ENCODE measurements at regions of chr13 and their contacts with region 1.

Region 1: DNA sequence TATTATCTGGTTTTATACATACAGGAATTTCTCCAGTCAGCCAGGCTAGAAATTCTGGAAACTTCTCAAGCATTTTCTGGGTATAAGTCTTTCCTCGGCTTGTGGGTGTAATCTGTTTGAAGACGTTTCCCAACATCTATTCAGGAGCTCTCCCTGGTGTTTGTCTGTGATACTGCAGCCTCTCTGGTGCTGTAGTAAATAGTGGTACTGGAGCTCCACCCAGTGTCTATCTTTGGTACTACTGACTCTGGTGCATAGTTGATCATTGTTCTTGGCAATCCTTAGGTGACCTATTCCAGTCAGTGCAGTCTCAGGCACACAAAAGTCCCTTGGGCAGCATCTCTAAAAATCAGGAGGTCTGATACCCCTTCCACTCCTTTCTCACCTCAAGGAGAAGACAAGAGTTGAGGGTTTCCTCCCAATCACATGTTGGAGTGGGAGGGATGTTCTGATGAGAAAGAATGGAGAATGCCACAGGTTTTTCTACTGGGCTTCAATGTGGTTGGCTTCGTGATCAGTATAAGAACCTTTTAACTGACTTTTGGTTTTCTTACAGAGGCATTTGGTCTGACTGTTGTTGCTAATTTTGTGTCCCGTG is 115.5 kb downstream of the CYSLTR2 start:
- DNase-seq: peak; percentile 88
- H3K4me3 ChIP-seq: no peak overlapping the region
- H3K27ac ChIP-seq: no peak overlapping the region
- H3K4me1 ChIP-seq: peaks cover 0 to 5% (median 2%) of the 10 kb centered on the region in 4 donors
- H3K27me3 ChIP-seq: no peaks in the 10 kb centered on the region
- CTCF ChIP-seq: peak; percentile 97 to 100 (median 98)
- EP300 ChIP-seq: no peak
- POLR2A ChIP-seq: no peak

Region 2: DNA sequence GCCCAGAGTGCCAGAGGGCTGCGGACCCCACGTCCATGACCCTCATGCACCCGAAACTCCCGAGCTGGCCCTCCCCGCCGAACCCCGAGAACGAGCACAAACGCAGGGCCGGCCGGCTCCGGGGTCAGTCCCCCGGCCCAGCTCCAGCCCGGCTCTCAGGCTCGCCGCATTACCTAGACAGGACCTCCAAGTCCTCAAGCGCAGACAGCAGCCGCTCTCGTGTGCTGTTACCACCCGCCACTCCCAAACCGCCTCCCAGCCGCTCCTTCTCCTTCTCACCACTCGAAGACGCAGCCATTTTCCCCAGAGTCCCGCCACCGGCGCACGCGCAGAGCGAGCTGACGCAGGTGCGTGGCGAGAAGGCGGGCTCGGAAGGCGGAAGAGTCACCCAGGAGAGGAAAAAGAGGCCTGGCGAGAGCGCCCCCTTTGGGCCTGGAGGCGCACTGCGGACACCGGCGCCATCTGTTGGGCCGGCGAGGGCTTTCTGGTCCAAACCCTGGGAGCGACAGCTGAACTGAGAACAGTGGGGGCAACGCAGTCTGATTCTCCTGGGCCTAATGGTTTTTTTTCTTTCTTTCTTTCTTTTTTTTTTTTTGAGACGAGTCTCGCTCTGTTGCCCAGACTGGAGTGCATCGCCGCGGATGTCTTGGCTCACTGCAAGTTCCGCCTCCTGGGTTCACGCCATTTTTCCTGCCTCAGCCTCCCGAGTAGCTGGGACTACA is 674.3 kb before region 1 on chr13 and contains the start of gene MED4:
- in situ Hi-C with region 1: loop called in 2 of 4 experiments (anchors 25 kb)
- intact Hi-C with region 1: no loop called
- DNase-seq: peak; percentile 97
- H3K4me3 ChIP-seq: peak within 1 kb of the TSS; percentile 74 to 96 (median 90)
- H3K27ac ChIP-seq: peak within 1 kb of the TSS; percentile 74 to 91 (median 85)
- H3K4me1 ChIP-seq: peaks cover 10 to 37% (median 15%) of the 10 kb centered on the region in 4 donors
- H3K27me3 ChIP-seq: no peaks in the 10 kb centered on the region
- CTCF ChIP-seq: peak; percentile 99
- EP300 ChIP-seq: no peak
- POLR2A ChIP-seq: peak; percentile 86
- total RNA-seq, gene MED4: 31.4 to 39.7 (median 37.2) TPM

Region 3: GRCh38 chr13:48110931-48111721 is 658.1 kb before region 1 on chr13:
- in situ Hi-C with region 1: loop called in 1 of 4 experiments (anchors 25 kb)
- intact Hi-C with region 1: no loop called
- DNase-seq: no peak
- H3K4me3 ChIP-seq: no peak overlapping the region
- H3K27ac ChIP-seq: peak overlapping the region in 1 of 4 donors; percentile 21
- H3K4me1 ChIP-seq: peaks cover 0 to 6% (median 0%) of the 10 kb centered on the region in 4 donors
- H3K27me3 ChIP-seq: no peaks in the 10 kb centered on the region
- CTCF ChIP-seq: no peak
- EP300 ChIP-seq: no peak
- POLR2A ChIP-seq: no peak

Region 4: DNA sequence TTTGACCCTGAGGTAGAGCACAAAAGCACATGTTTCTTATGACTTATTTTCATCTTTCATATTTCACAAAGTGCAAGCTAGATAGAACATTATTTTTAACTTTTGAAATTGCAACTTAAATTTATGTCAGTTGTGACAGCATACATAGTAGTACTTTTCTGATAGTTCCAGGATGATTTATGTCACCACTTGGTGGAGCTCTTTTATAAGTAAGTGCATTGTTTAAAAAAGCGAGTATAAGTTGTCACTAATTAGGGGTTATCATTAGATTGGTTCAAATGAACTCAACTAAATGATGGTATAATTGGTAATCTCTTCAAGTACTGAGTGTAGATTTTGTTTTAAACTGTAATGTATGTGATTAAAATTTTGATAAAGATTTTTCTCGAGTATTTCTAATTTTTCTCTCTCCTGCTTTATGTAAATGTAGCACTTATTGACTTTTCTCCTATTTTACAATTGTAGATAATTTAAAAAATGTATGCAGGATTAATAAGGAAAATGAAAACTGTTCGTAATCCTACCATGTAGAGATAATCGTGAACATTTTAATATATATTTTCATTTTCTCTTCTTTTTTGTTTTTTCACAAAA is 434.6 kb before region 1 on chr13:
- in situ Hi-C with region 1: loop called in 2 of 4 experiments (anchors 25 kb)
- intact Hi-C with region 1: no loop called
- DNase-seq: no peak
- H3K4me3 ChIP-seq: no peak overlapping the region
- H3K27ac ChIP-seq: no peak overlapping the region
- H3K4me1 ChIP-seq: no peaks in the 10 kb centered on the region
- H3K27me3 ChIP-seq: no peaks in the 10 kb centered on the region
- CTCF ChIP-seq: peak; percentile 44 to 56 (median 53)
- EP300 ChIP-seq: no peak
- POLR2A ChIP-seq: no peak

Region 5: GRCh38 chr13:48595431-48596429 is 173.5 kb before region 1 on chr13:
- in situ Hi-C with region 1: loop called (anchors 5 to 25 kb)
- intact Hi-C with region 1: loop called (anchors 10 kb)
- DNase-seq: peak; percentile 64
- H3K4me3 ChIP-seq: no peak overlapping the region
- H3K27ac ChIP-seq: no peak overlapping the region
- H3K4me1 ChIP-seq: peaks cover 0 to 21% (median 9%) of the 10 kb centered on the region in 4 donors
- H3K27me3 ChIP-seq: no peaks in the 10 kb centered on the region
- CTCF ChIP-seq: peak; percentile 45 to 92 (median 63)
- EP300 ChIP-seq: no peak
- POLR2A ChIP-seq: no peak

Measured in transverse colon (tissue), 4 donors.